ENCODE measurements at regions of chr16 and their contacts with region 1.

Region 1: GRCh38 chr16:69613378-69614154 is 47.8 kb downstream of the NFAT5 start:
- DNase-seq: no peak
- ATAC-seq: peak; percentile 20

Region 2: DNA sequence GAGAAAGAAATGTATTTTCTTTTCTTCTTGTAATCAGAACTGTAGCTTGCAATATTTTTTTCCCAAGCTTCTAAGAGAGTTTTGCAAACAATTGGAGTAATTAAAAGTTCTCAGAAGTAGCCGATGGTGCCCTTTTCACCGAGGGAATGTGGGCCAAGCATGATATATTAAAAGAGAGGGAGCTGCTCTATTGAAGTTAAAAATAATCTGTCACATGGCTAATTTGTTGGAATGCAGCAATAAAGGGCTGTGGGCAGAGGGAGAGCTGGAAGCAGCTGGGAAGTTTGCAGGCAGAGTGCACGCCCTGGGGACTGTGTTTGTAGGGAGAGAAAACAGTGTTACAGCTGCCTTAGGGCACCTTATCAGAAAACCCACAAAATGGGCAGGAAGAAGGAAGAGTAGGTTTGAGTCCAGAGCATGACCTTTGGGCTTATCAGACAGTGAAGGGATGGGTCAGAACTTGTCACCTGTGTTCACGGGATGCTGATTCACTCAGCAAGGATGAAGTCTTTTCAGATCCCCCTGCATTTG is 209.2 kb before region 1 on chr16:
- intact Hi-C with region 1: loop called (anchors 10 kb)
- DNase-seq: peak; percentile 45
- ATAC-seq: peak; percentile 93

Region 3: GRCh38 chr16:69424053-69424934 is 189.3 kb before region 1 on chr16 and contains the start of gene CYB5B:
- intact Hi-C with region 1: no loop called
- DNase-seq: peak; percentile 93
- ATAC-seq: peak; percentile 99
- total RNA-seq, gene CYB5B: 59.8 TPM